ENCODE measurements at regions of chr9 and their contacts with region 1.

Region 1: DNA sequence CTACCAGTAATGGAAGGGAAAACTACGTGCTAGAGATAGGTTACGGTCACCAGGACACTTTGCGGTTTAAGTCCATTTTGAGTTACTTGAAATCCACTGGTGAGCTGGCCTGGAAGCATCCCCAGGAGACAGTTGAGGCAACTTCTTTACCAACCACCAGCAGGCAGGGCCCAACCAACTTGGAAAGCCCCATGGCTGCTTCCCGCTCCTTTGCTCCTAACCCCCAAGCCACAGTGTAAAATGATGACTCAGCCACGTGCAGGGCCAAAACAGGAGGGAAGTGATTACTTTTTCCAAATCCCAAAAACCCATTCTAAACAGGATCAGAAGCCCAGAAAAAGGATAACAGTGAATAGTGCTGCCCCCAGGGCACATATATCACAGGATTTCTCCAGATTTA is 87.4 kb downstream of the PAX5 start:
- DNase-seq: no peak
- ATAC-seq: no peak
- H3K4me3 ChIP-seq: no peak overlapping the region
- H3K27ac ChIP-seq: no peak overlapping the region
- H3K4me1 ChIP-seq: no peaks in the 10 kb centered on the region
- H3K27me3 ChIP-seq: peaks cover 0 to 29% (median 13%) of the 10 kb centered on the region in 7 donors
- CTCF ChIP-seq: no peak

Region 2: DNA sequence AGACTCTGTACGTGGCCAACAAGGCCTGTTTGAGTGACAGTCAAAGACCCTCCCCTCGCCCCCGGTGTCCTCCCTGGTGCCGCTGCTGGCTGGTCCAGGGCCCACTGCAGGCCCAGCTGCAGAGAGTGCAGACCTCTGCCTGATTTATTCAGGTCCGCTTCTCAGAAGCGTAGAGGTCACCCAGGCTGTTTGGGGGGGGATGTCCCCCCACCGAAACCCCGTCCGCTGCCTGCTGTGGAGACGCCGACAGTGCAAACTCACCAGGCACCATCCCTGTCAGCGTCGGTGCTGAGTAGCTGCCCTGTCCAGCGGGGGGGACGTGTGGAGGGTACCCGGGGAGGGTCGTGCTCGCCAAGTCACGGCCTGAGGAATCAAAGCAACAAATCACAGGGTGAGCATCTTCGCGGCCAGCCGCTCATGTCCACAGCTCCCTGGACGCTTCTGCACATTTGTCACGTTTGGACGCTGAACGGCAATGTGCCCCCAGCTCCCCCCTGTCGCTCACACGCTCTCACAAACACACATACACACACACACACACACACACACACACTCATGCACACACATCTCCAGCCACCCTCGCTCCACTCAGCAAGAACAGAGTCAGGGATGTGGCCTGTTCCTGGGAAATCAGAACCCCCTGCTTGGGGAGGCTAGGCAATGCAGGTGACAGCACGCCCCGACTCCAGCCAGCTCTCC is 64.8 kb before region 1 on chr9:
- intact Hi-C with region 1: loop called in 1 of 10 experiments (anchors 10 kb)
- DNase-seq: no peak
- ATAC-seq: no peak
- H3K4me3 ChIP-seq: no peak overlapping the region
- H3K27ac ChIP-seq: no peak overlapping the region
- H3K4me1 ChIP-seq: no peaks in the 10 kb centered on the region
- H3K27me3 ChIP-seq: peaks cover 4 to 56% (median 33%) of the 10 kb centered on the region in 7 donors
- CTCF ChIP-seq: no peak

Region 3: GRCh38 chr9:37036776-37037502 is 90.3 kb after region 1 on chr9:
- intact Hi-C with region 1: no loop called
- DNase-seq: peak in 1 of 2 donors; percentile 44
- ATAC-seq: peak in 7 of 8 donors; percentile 62 to 77 (median 68)
- H3K4me3 ChIP-seq: peak overlapping the region; percentile 34 to 64 (median 58)
- H3K27ac ChIP-seq: peak overlapping the region in 1 of 10 donors; percentile 10
- H3K4me1 ChIP-seq: peaks cover 10 to 47% (median 42%) of the 10 kb centered on the region in 9 donors
- H3K27me3 ChIP-seq: peaks cover 41 to 100% (median 100%) of the 10 kb centered on the region in 7 donors
- CTCF ChIP-seq: no peak

Measured in heart right ventricle (tissue), 16 donors.